ENCODE measurements at regions of chr2 and their contacts with region 1.

Region 1: GRCh38 chr2:234544659-234545611 is 48.1 kb upstream of the ARL4C start:
- DNase-seq: peak; percentile 27

Region 2: GRCh38 chr2:235106874-235107639 is 562.1 kb after region 1 on chr2:
- in situ Hi-C with region 1: loop called (anchors 25 kb)
- DNase-seq: peak; percentile 40

Region 3: DNA sequence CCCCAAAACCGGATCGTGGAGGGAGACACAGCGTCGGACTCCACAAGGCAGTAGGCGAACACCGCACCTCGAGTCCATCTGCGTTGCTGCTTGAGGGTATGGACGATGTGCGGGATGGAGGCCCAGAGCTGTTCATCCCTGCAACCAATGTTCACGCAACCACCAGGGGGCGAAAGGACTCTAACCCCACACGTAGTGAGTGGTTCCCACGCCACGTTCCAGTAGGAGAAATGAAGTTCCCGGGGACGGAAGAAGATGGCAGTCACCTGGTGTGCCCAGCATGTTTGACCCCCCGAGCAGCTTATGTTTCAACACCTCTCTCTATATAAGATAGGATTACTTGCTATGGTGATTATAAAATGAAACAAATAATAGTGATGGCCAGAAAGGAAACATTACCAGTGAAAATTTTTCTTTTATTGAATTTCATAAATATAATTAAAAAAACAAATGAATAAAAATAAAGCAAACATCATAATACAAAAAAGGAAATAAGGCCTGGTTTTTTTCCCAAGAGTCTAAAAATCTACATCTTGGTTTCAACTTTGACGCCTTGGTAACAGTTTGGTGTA is 591.1 kb after region 1 on chr2:
- in situ Hi-C with region 1: no loop called
- DNase-seq: peak; percentile 68

Region 4: GRCh38 chr2:235570256-235570655 is 1025.3 kb after region 1 on chr2:
- in situ Hi-C with region 1: no loop called
- DNase-seq: no peak